ENCODE measurements at regions of chrX and their contacts with region 1.

Region 1: DNA sequence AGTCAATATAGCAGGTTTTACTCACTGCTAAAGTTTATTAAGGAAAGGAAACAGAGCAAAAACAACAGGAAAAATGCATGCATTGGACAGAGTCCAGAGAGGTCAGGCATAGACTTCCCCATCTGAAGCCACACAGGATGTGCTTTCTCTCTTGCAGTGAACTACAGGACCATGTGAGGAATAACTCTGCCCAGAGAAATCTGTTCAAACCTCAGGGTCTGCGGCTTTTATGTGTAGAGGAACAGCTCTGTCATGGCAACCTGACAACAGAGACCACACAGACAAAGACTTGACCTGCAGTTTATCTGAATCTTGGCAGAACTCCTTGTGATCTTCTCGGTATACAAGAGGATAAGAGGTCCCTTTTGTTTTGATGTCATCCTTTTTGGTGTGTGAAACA is 46.3 kb upstream of the LONRF3 start:
- H3K4me3 ChIP-seq: no peak overlapping the region
- H3K27ac ChIP-seq: no peak overlapping the region
- H3K4me1 ChIP-seq: no peaks in the 10 kb centered on the region
- CTCF ChIP-seq: no peak

Region 2: GRCh38 chrX:118577041-118577440 is 351.1 kb before region 1 on chrX:
- CTCF ChIA-PET with region 1: no interaction called
- POLR2A ChIA-PET with region 1: interaction called, 11 read pairs
- H3K4me3 ChIP-seq: no peak overlapping the region
- H3K27ac ChIP-seq: no peak overlapping the region
- H3K4me1 ChIP-seq: no peaks in the 10 kb centered on the region
- CTCF ChIP-seq: no peak

Region 3: DNA sequence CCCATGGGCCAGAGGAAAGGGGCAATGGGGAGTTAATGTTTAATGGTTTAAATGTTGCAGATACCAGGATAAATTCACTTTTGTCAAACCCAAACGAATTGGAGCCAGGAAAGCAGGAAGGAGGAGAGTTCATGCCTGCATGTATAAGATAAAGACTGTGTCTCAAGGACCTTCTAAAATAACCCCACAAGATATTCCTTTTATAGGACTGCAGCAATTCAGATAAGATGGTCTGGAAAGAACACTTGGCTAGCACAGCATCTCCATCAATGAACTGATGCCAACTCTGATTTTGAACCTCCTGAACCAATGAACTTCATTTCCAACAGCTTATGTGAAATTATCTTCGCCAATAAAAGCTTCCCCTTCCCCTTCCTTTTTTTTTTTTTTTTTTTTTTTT is 15.0 kb after region 1 on chrX:
- CTCF ChIA-PET with region 1: no interaction called
- POLR2A ChIA-PET with region 1: no interaction called
- H3K4me3 ChIP-seq: no peak overlapping the region
- H3K27ac ChIP-seq: no peak overlapping the region
- H3K4me1 ChIP-seq: no peaks in the 10 kb centered on the region
- CTCF ChIP-seq: no peak

Measured in HEK293 (cell line).